ENCODE measurements at regions of chr19 and their contacts with region 1.

Region 1: GRCh38 chr19:40603389-40604135 is 2.4 kb downstream of the LTBP4 start:
- DNase-seq: peak; percentile 99
- ATAC-seq: peak; percentile 80
- H3K4me3 Mint-ChIP-seq: peak overlapping the region; percentile 52
- H3K27ac Mint-ChIP-seq: no peak overlapping the region
- H3K4me1 Mint-ChIP-seq: peaks cover 66% of the 10 kb centered on the region
- H3K27me3 Mint-ChIP-seq: peaks cover 22% of the 10 kb centered on the region

Region 2: GRCh38 chr19:40403262-40403984 is 200.1 kb before region 1 on chr19:
- CTCF ChIA-PET with region 1: no interaction called
- POLR2A ChIA-PET with region 1: interaction called, 3 read pairs
- intact Hi-C with region 1: loop called in 1 of 2 experiments (anchors 2 kb)
- DNase-seq: peak; percentile 94
- ATAC-seq: peak; percentile 67
- H3K4me3 Mint-ChIP-seq: peak overlapping the region; percentile 77
- H3K27ac Mint-ChIP-seq: peak overlapping the region; percentile 0
- H3K4me1 Mint-ChIP-seq: peaks cover 19% of the 10 kb centered on the region
- H3K27me3 Mint-ChIP-seq: no peaks in the 10 kb centered on the region

Region 3: DNA sequence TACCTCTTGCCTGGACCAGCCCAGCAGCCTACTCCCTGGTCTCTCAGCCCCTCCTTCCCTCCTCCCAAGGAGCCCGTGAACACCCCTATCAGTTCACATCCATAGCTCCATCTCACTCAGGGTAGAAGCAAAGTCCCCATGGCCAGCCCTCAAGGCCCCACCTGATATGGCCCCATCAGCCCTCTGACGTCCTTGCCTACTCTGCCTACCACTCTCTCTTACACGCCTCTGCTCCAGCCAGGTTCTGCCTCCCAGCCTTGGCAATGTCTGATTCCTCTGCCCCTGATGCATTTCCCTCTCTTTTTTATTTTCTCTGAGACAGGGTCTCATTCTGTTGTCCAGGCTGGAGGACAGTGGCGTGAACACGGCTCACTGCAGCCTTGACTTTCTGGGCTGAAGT is 151.5 kb before region 1 on chr19:
- CTCF ChIA-PET with region 1: no interaction called
- POLR2A ChIA-PET with region 1: no interaction called
- intact Hi-C with region 1: no loop called
- DNase-seq: no peak
- ATAC-seq: no peak
- H3K4me3 Mint-ChIP-seq: no peak overlapping the region
- H3K27ac Mint-ChIP-seq: no peak overlapping the region
- H3K4me1 Mint-ChIP-seq: no peaks in the 10 kb centered on the region
- H3K27me3 Mint-ChIP-seq: no peaks in the 10 kb centered on the region

Region 4: DNA sequence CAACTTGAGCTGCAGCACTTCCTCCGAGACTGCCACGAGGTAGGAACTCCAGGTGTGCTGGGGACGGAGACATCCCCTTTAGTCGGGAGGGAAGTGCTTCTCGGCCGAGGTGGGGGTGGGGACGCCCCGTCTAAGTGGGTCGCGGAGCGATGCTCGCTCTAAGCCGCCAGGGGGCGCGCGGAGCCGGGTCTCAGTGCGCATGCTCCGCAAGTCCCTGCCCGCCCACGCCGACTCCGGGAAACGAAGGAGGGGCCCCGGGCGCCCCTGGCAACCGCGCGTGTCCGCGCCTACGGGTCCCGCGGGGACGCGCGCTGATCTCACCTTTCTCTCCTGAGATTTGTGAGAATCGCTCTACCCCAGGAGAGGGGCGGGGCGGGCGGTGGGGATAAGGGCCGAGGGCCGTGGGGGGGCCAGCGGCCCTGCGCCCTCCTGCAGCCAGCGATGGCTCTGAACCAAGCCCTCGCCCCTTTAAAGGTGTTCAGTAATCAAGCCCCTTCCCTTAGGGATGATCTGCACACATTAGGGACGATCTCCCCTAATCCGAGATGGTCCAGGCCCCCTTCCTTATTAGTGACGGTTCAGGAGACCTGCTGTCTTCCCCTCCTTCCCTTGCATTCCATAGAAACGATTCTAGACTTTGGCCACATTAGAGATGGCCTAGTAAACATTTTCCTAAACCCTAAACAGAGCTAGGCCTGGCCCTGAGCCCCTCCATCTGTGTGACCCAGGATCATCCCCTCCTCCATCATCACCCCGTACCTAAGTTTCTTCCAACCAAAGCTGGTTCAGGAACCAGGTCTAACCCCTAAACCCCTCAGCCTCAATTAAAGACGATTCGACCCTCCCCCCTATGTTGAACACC is 74.2 kb before region 1 on chr19:
- CTCF ChIA-PET with region 1: interaction called, 3 read pairs
- POLR2A ChIA-PET with region 1: no interaction called
- intact Hi-C with region 1: loop called (anchors 1 to 2 kb)
- DNase-seq: peak; percentile 95
- ATAC-seq: peak; percentile 75
- H3K4me3 Mint-ChIP-seq: peak overlapping the region; percentile 47
- H3K27ac Mint-ChIP-seq: no peak overlapping the region
- H3K4me1 Mint-ChIP-seq: peaks cover 11% of the 10 kb centered on the region
- H3K27me3 Mint-ChIP-seq: peaks cover 19% of the 10 kb centered on the region

Region 5: GRCh38 chr19:40633207-40633606 is 29.6 kb after region 1 on chr19:
- CTCF ChIA-PET with region 1: interaction called, 24 read pairs
- POLR2A ChIA-PET with region 1: no interaction called
- intact Hi-C with region 1: loop called (anchors 1 to 2 kb)
- DNase-seq: no peak
- ATAC-seq: no peak
- H3K4me3 Mint-ChIP-seq: no peak overlapping the region
- H3K27ac Mint-ChIP-seq: no peak overlapping the region
- H3K4me1 Mint-ChIP-seq: peaks cover 15% of the 10 kb centered on the region
- H3K27me3 Mint-ChIP-seq: peaks cover 5% of the 10 kb centered on the region

Region 6: DNA sequence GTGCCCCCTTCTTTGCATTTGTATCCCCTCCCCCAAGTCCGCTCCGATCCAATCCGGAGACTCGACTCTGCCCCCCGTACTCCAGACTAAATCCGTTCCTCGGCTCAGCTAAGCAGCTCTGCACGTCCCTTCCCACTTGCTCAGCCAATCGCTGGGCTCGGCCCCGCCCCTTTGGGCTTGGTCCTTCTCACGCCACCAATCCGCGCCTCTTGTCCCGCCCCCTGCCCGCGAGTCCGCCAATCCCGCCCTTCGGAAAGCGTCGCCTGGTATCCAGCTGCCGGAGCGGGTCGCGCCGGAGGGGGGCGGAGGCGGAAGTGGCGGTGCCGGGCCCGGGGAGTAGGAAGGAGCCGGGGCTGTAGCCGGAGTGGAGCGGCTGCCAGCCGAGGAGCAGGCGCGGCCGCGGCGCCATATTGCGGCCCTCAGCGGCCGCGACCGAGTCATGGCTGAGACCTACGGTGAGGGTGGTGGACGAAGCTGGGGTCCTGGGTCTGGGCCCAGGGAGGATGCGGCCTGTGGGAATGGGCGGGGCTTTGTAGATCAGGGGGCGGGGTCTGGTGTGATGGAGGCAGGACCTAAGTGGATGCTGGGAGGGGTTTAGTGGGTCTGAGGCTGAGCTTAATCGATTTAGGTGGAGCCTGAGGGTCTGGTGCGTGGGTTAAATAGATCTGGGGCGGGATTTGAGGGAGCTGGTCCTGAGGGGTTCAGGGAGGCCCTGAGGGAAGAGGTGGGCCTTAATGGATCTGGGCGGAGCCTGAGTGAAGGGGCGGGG is 174.6 kb after region 1 on chr19 and contains the start of gene RAB4B:
- CTCF ChIA-PET with region 1: no interaction called
- POLR2A ChIA-PET with region 1: no interaction called
- intact Hi-C with region 1: loop called in 1 of 2 experiments (anchors 2 kb)
- DNase-seq: peak; percentile 100
- ATAC-seq: peak; percentile 79
- H3K4me3 Mint-ChIP-seq: peak within 1 kb of the TSS; percentile 84
- H3K27ac Mint-ChIP-seq: peak within 1 kb of the TSS; percentile 94
- H3K4me1 Mint-ChIP-seq: peaks cover 38% of the 10 kb centered on the region
- H3K27me3 Mint-ChIP-seq: no peaks in the 10 kb centered on the region
- total RNA-seq, gene RAB4B: 26.4 to 33.7 TPM

Measured in activated CD4-positive, alpha-beta T cell treated with anti-CD3 and anti-CD28 coated beads for 36 hours (primary cell).